ENCODE measurements at regions of chr16 and their contacts with region 1.

Region 1: DNA sequence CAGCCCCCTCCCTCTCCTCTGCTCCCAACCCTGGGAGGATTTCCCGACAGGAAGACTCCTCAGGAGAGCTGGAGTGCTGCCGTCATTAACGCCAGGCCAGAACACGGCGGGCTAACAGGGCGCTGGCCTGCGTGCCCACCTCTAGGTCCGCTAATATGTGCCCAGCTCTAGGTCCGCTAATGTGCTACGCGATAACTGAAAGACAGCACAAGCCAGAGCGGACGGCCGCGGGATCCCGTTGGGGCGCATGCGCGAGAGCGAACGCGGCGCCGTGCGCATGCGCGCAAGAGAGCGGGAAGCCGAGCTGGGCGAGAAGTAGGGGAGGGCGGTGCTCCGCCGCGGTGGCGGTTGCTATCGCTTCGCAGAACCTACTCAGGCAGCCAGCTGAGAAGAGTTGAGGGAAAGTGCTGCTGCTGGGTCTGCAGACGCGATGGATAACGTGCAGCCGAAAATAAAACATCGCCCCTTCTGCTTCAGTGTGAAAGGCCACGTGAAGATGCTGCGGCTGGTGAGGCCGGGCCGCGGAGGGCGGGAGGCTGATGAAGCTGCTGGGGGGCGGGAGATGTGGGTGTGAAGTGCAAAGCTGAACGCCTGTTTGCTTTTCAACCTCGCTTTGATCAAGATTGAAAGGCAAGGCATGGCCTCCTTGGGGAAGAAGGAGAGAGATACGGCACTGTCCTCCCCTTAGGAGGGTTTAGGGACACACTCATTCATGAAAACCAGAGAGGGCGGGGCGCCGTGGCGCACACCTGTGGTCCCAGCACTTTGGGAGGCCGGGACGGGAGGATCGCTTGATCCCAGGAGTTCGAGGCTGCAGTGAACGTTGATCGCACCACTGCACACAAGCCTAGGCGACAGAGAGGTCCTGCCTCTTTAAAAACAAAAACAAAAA is at the start of gene CKLF:
- DNase-seq: peak; percentile 83 to 94
- H3K4me3 ChIP-seq: peak within 1 kb of the TSS; percentile 60 to 66
- H3K27ac ChIP-seq: peak within 1 kb of the TSS; percentile 93 to 96
- H3K4me1 ChIP-seq: peaks cover 0 to 70% (median 46%) of the 10 kb centered on the region in 4 donors
- H3K27me3 ChIP-seq: no peaks in the 10 kb centered on the region
- CTCF ChIP-seq: no peak

Region 2: DNA sequence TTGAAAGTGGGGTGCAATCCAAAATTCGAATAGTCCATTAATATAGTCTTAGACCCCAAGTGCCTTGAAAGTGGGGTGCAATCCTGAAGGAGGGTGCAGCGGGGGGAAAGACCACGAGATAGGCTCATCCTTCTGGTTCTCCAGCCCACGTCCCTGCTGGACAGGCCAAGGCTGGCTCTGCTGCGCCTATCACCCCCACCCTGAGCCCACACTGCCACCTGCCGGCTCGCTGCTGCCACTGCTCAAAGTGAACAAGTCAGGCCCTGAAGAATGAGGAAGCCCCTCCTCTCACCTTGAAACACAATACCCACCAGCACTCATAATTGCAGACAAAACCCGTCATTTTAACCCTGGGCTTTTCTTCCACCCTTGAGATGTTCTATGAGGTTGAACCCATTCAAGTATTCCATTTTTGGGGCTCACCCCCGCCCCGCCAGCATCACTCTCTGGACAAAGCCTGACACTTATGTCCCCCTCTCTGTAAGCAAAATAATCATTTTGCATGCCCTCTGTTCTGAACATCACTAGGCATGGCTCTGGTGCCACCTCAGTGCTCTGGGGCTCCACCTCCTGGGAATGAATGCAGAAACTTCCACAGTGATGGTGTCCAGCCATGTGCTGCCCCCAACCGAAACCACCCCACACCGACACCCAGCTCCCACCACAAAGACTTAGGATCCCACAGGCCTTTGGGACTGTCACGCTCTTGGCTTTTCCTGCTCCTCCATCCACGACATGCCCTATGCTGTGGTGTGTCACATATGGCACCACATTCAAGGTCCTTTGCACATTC is 68.6 kb before region 1 on chr16:
- intact Hi-C with region 1: loop called (anchors 5 kb)
- DNase-seq: peak; percentile 76 to 85
- H3K4me3 ChIP-seq: no peak overlapping the region
- H3K27ac ChIP-seq: no peak overlapping the region
- H3K4me1 ChIP-seq: peaks cover 0 to 26% (median 22%) of the 10 kb centered on the region in 4 donors
- H3K27me3 ChIP-seq: no peaks in the 10 kb centered on the region
- CTCF ChIP-seq: peak; percentile 83 to 93

Region 3: DNA sequence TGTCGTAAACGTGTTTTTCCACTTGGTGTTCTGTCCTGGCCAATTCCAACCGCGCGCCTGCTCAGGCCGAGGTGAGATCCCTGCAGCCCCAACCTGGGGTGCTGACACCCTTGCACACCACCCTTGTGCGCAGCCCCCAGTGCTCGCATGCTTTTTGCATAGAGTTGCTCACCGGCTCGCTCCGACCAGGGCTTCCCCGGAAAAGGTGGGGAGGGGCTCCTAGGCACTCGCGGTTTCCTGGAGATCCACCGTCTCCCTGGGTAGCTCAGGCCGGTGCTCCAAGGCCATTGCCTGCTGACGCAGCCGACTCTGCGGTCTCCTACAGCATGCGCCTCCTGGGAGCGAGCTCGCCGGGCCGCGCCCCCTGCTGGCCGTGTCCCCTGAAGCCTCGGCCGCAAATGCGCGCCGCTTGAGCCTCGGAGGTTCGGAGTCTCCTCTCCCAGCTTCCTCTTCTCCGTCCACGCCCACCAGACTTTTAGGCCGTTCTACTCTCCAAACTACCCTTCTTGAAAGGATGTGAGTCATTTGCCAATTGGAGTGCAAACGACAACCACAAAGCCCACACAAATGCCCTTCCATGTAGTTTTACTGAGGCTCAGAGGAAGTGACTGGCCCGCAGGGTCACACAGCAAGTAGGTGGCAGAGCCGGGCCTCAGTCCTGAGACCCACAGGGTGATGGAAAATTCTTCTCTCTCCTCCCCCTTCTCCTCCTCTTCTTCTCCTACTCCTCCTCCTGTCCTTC is 320.6 kb after region 1 on chr16:
- intact Hi-C with region 1: loop called (anchors 10 kb)
- DNase-seq: peak; percentile 88 to 95
- H3K4me3 ChIP-seq: peak overlapping the region; percentile 37 to 45
- H3K27ac ChIP-seq: peak overlapping the region; percentile 68 to 75
- H3K4me1 ChIP-seq: peaks cover 0 to 23% (median 13%) of the 10 kb centered on the region in 4 donors
- H3K27me3 ChIP-seq: no peaks in the 10 kb centered on the region
- CTCF ChIP-seq: peak; percentile 92 to 93

Measured in tibial artery (tissue), 4 donors.